ENCODE measurements at regions of chr3 and their contacts with region 1.

Region 1: DNA sequence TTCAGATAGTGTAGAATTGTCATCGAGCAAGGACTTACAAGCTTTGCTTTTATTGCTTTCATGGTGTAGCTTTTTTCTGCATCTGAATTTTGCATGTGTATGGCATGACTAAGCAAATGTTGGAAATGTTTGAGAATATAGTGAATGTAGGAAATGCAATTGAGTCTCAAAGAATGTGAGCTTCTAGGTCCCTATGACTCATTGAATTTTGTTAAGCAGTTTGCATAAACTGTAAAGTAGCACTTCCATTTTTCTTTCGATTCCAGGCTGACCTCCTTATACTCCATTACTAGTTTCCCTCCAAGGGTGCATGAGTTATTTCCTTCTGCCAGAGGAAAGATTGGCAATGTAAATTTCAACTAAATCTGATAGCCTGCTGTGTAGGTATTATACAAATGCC is 619.2 kb downstream of the DIPK2A start:
- DNase-seq: no peak
- ATAC-seq: no peak

Region 2: GRCh38 chr3:144265542-144266100 is 325.2 kb before region 1 on chr3:
- intact Hi-C with region 1: loop called (anchors 10 kb)
- DNase-seq: no peak
- ATAC-seq: peak; percentile 92

Region 3: DNA sequence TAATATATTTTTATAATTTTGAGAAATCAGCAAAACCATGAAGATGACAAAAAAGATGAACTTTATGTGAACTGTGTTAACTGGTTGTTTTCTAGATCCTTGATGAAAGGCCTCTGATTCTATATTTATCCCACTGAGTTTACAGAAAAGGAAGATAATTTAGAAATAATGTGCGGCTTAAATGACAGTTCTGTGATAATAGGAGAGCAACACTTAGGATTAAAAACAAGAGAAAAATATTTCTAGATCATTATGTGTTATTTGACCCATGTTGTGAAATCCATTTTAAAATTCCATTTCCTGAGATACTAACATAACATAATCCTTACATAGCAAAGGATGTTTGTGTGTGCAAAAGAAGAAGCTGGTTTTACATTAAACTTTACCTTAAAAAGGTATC is 21.2 kb before region 1 on chr3:
- intact Hi-C with region 1: no loop called
- DNase-seq: no peak
- ATAC-seq: no peak

Measured in sciatic nerve (tissue), 2 donors.